ENCODE measurements at regions of chr9 and their contacts with region 1.

Region 1: DNA sequence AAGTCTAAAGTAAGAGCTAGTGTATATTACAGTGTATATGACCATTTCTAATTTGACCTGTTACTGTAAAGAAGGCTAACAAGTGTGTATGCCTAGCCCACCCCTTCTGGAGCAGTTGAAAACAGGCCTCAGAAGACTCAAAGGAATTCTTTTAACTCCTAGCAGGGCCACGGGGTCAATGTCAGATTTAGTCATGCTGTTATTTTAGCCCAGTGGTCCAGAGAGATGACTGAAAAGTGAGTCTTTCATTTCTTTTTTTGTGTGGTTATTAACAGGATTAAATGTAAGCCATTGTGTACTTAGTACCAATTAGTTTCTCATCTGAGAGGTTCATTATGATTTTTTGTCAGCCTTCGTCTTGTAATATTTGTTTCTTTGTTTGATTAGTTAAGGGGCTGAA is 24.4 kb downstream of the ZCCHC7 start:
- DNase-seq: no peak
- H3K4me3 Mint-ChIP-seq: no peak overlapping the region
- H3K27ac Mint-ChIP-seq: no peak overlapping the region
- H3K4me1 Mint-ChIP-seq: peaks cover 45% of the 10 kb centered on the region
- H3K27me3 Mint-ChIP-seq: no peaks in the 10 kb centered on the region

Region 2: GRCh38 chr9:37036776-37037502 is 107.8 kb before region 1 on chr9:
- CTCF ChIA-PET with region 1: interaction called, 3 read pairs
- intact Hi-C with region 1: loop called (anchors 5 kb)
- DNase-seq: peak; percentile 51
- H3K4me3 Mint-ChIP-seq: peak overlapping the region; percentile 81
- H3K27ac Mint-ChIP-seq: no peak overlapping the region
- H3K4me1 Mint-ChIP-seq: peaks cover 30% of the 10 kb centered on the region
- H3K27me3 Mint-ChIP-seq: peaks cover 80% of the 10 kb centered on the region

Region 3: DNA sequence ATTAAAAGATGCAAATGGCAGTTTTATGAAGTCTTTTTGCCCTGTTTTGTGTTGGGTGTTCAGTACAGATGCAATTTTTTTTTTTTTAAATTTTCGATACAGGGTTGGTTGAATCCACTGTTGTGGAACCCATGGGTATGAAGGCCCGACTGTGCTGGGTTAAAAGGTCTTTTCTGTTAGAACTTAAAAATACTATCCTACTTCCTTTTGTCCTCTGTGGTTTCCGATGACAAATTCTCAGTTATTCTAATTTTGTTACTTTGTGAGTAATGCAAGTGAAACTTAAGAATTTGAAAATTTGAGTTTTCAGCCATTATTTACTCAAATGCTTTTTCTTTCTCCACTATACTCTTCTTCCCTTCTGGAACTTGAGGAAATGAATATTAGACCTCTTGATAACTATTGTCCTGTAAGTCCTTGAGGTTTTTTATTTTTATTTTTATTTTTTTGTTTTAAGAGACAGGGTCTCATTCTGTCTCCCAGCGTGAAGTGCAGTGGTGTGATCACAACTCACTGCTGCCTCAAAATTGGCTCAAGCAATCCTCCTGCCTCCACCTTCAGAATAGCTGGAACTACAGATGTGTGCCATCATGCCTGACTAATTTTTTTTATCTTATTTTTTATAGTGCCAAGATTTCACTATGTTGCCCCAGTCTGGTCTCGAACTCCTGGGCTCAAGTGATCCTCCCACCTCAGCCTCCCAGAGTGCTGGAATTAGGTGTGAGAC is 43.1 kb after region 1 on chr9:
- CTCF ChIA-PET with region 1: no interaction called
- intact Hi-C with region 1: loop called (anchors 5 kb)
- DNase-seq: peak; percentile 18
- H3K4me3 Mint-ChIP-seq: no peak overlapping the region
- H3K27ac Mint-ChIP-seq: peak overlapping the region; percentile 85
- H3K4me1 Mint-ChIP-seq: peaks cover 52% of the 10 kb centered on the region
- H3K27me3 Mint-ChIP-seq: no peaks in the 10 kb centered on the region